AG04450 (cell line): ENCODE measurements at regions of chr12 and their contacts with region 1.

Region 1: GRCh38 chr12:31406345-31406744 is 80.4 kb upstream of the SINHCAF start:
- DNase-seq: no peak
- H3K4me3 ChIP-seq: no peak overlapping the region
- H3K27ac ChIP-seq: no peak overlapping the region
- H3K27me3 ChIP-seq: no peaks in the 10 kb centered on the region
- CTCF ChIP-seq: no peak

Region 2: DNA sequence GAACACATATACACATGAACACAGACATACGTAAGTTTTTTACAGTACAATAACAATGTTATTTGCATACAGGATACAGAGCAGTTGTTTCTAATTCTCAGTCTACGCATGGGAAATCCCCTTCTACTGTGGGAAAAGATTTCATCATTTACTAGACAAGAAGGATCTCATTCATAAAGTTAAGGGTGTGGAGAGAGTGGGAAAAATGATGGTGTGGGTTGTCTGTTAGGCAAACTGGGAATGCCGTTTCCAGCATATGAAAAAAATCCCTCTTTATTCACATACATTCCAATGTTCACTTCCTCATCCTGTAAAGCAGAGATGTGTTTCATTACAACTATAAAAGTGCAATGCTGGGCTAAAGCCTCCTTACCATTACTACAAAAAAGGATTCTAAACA is 201.3 kb before region 1 on chr12:
- CTCF ChIA-PET with region 1: no interaction called
- POLR2A ChIA-PET with region 1: no interaction called
- DNase-seq: no peak
- H3K4me3 ChIP-seq: no peak overlapping the region
- H3K27ac ChIP-seq: no peak overlapping the region
- H3K27me3 ChIP-seq: no peaks in the 10 kb centered on the region
- CTCF ChIP-seq: no peak

Region 3: GRCh38 chr12:31393004-31393550 is 13.3 kb before region 1 on chr12:
- CTCF ChIA-PET with region 1: interaction called, 10 read pairs
- POLR2A ChIA-PET with region 1: no interaction called
- DNase-seq: no peak
- H3K4me3 ChIP-seq: no peak overlapping the region
- H3K27ac ChIP-seq: no peak overlapping the region
- H3K27me3 ChIP-seq: no peaks in the 10 kb centered on the region
- CTCF ChIP-seq: no peak

Region 4: DNA sequence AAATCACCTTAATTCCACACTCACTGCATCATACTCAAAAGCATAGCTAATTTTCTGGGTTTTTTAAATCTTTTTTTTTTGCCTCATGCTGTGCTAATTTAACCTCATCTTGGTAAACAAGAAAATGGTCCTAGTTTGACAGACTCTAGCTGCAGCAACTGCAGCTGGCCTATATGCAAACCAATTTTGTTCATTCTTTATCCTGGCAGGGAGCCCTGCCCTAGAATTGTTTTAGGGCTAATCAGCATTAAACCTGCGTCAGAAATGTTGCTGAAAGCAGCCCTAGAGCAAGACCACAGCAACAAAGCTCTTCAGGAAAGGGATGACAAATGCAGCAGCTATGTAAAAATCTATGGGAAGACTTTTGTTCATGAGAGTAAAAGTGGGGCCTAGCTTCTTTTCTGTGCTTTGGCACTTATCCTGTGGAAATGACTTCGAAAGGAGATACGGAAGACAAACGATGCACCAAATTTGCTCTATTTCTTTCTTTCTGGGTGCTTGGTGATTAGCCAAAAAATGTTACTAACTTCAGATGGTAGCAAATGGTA is 112.4 kb after region 1 on chr12:
- CTCF ChIA-PET with region 1: interaction called, 17 read pairs
- POLR2A ChIA-PET with region 1: no interaction called
- DNase-seq: peak; percentile 99
- H3K4me3 ChIP-seq: peak overlapping the region; percentile 12; the same call in 1 of the 2 replicates
- H3K27ac ChIP-seq: peak overlapping the region; percentile 94
- H3K27me3 ChIP-seq: no peaks in the 10 kb centered on the region
- CTCF ChIP-seq: no peak

Region 5: GRCh38 chr12:31631784-31632183 is 225.4 kb after region 1 on chr12:
- CTCF ChIA-PET with region 1: interaction called, 76 read pairs
- POLR2A ChIA-PET with region 1: interaction called, 6 read pairs
- DNase-seq: no peak
- H3K4me3 ChIP-seq: no peak overlapping the region
- H3K27ac ChIP-seq: no peak overlapping the region
- H3K27me3 ChIP-seq: no peaks in the 10 kb centered on the region
- CTCF ChIP-seq: no peak

Region 6: DNA sequence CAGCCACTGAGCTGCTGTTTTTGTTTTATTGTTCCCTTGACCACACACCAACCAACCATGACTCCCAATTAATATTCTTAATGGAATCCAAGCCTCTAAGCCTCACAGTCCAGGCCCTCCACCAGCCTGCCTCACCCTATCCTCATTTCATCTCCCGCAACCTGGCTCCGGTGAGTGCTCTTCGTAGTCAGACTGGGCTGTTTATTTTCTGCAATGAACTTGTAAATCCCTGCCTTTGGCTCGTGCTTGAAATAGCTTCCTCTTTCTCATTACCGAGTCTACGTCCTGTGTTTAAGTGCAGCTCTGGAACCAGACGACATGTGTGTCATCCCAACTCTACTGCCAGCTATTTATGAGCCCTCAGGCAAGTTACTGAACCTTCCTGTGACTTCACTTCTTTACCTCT is 240.7 kb after region 1 on chr12:
- CTCF ChIA-PET with region 1: interaction called, 32 read pairs
- POLR2A ChIA-PET with region 1: no interaction called
- DNase-seq: no peak
- H3K4me3 ChIP-seq: no peak overlapping the region
- H3K27ac ChIP-seq: no peak overlapping the region
- H3K27me3 ChIP-seq: no peaks in the 10 kb centered on the region
- CTCF ChIP-seq: no peak